ENCODE measurements at regions of chr9 and their contacts with region 1.

Region 1: GRCh38 chr9:2132484-2133082 is 117.4 kb downstream of the SMARCA2 start:
- DNase-seq: no peak
- H3K4me3 ChIP-seq: no peak overlapping the region
- H3K27ac ChIP-seq: no peak overlapping the region
- H3K4me1 ChIP-seq: peaks cover 0 to 30% of the 10 kb centered on the region in 2 donors
- H3K27me3 ChIP-seq: no peaks in the 10 kb centered on the region
- CTCF ChIP-seq: peak; percentile 41 to 81 (median 69)

Region 2: GRCh38 chr9:2109069-2109650 is 23.4 kb before region 1 on chr9:
- intact Hi-C with region 1: no loop called
- DNase-seq: no peak
- H3K4me3 ChIP-seq: no peak overlapping the region
- H3K27ac ChIP-seq: no peak overlapping the region
- H3K4me1 ChIP-seq: peaks cover 0 to 2% of the 10 kb centered on the region in 2 donors
- H3K27me3 ChIP-seq: no peaks in the 10 kb centered on the region
- CTCF ChIP-seq: no peak

Region 3: GRCh38 chr9:2181792-2182191 is 49.2 kb after region 1 on chr9:
- intact Hi-C with region 1: loop called (anchors 2 kb)
- DNase-seq: no peak
- H3K4me3 ChIP-seq: no peak overlapping the region
- H3K27ac ChIP-seq: no peak overlapping the region
- H3K4me1 ChIP-seq: no peaks in the 10 kb centered on the region
- H3K27me3 ChIP-seq: no peaks in the 10 kb centered on the region
- CTCF ChIP-seq: peak; percentile 19 to 60 (median 28)

Region 4: DNA sequence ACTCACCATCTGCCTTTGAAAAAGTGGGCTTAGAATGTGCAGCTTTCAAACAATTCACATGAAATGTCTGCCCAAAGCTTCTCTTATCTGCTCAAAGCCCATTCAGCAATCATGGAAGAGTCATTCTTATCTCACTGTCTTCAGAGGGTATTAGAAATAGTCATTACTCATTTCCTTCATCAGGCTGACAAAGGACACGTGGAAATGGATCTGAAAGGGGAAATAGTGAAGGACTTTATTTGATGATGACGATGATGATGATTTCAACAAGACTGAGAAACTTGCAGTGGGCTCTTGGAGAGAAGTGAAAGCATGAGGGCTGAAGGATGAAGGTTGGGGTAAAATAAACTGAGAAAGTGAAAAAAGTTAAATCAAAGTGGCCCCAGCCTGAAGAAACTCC is 76.8 kb after region 1 on chr9:
- intact Hi-C with region 1: no loop called
- DNase-seq: no peak
- H3K4me3 ChIP-seq: no peak overlapping the region
- H3K27ac ChIP-seq: no peak overlapping the region
- H3K4me1 ChIP-seq: no peaks in the 10 kb centered on the region
- H3K27me3 ChIP-seq: no peaks in the 10 kb centered on the region
- CTCF ChIP-seq: no peak